GM13976 (cell line): ENCODE measurements at regions of chr18 and their contacts with region 1.

Region 1: DNA sequence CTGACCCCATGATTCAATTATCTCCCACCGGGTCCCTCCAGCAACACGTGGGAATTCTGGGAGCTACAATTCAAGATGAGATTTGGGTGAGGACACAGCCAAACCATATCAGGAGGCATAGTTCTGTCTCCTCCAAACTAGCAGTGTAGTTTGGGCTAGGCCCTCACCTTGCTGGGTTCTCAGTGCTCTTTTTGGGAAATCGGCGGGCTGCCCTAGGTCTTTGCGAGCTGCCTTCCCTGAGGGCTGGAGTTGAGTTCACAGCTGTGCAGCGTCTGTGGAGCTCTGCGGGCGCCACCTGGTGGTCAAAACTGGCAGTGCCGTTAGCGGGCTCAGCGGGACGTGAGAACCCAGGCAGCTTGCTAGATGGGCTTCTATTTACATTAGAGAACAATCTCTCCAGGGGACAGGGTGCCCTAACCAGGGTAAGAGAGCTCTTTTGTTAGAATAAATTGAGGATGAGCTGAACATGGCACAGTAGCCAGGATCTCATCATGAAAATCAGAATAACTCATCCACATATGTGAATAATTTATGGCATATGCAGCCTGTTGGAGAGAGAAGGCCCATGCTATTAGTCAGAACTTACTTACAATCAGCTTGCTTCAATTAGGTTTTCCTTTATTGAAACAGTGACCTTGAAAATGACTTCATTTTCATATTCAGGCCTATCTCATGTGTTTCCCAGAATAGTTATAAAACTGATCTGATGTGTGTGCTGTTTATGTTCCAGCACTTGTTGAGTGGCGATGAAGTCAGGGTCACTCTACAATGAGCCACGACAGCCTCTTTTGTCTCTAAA is 27.4 kb upstream of the YES1 start:
- DNase-seq: peak; percentile 88
- CTCF ChIP-seq: peak; percentile 95

Region 2: DNA sequence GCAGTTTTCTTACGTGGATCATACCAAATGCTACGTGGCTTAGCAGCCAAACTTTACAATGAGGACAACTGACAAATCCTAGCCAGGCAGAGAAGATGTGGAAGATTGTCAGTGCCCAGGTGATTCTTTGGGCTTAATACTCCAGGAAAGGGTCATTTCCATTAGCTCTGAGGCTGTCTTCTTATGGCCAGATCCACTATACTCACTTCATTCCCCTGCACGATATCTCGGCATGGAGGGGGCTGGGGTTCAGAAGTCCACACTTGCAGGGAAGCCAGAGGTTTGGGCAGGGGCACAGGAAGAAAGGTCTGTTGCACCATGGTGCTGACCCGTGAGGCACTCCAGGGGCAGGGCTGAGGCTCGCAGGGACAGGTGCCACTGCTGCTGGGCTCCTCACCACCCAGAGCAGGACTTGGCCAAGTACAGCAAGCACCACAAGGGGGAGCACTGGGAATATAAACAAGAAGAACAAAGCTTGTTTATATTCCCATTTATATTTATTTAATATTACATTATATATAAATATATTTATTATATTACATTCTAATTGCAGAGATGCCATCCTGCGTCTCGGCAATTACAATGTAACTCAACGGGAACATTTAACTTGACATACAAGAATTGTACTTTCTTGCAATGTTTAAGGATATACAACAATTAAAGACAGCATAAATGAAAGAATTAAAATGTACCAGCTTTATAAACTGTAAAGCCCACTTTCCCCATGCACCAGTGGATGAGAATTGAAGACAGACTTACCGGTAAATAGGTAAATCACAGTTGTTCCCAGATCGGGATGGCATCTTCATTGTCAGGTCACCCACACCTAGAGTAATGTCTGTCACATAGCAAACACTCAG is 215.4 kb before region 1 on chr18:
- in situ Hi-C with region 1: loop called (anchors 10 kb)
- DNase-seq: peak; percentile 60
- CTCF ChIP-seq: peak; percentile 78